Left colon (tissue), 2 donors: ENCODE measurements at regions of chr3 and their contacts with region 1.

Region 1: GRCh38 chr3:11059090-11059798 is 66.7 kb downstream of the SLC6A1 start:
- DNase-seq: peak in 1 of 2 donors; percentile 41
- ATAC-seq: peak; percentile 87

Region 2: DNA sequence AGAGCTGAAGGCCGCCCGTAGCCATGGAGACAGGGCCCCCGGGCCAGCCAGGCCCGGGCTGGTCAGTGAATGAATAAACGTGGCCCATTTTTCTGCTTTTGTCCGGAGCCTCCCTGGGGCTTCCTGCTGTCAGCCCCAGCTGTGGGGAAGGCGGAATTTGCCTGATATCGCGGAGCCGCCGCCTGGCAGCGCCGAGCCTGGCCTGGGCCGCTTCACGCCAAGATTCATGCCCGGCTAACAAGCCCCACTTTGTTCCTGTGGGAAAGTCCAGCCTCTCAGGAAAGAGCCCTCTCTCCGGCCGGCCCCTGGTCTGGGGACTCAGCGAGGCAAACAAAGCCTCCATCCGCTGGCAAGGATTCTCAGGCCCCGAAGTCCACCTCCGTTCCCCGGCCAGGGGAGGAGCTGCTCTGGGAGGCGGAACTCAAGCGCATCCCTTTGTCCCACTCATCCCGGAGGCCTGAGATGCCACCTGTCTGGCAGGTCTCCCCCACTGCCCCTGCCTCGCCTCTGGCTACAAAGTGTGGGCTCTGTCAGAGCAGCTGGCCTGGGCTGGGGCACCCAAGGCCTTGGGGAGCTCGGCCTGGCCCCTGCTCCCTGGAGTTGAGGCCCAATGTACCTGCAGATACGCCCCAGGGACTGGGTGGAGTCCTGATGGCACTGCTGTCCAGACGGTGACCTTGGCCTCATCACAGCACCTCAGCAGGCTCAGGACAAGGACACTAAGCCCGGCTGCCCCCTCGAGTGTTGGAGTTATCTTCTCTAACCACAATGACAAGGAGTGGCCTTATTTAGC is 294.8 kb before region 1 on chr3:
- intact Hi-C with region 1: loop called in 1 of 2 experiments (anchors 10 kb)
- DNase-seq: no peak
- ATAC-seq: no peak

Region 3: GRCh38 chr3:10945683-10946287 is 113.5 kb before region 1 on chr3:
- intact Hi-C with region 1: loop called (anchors 2 to 10 kb)
- DNase-seq: peak in 1 of 2 donors; percentile 53
- ATAC-seq: peak; percentile 65

Region 4: GRCh38 chr3:11155341-11156025 is 96.2 kb after region 1 on chr3:
- intact Hi-C with region 1: no loop called
- DNase-seq: peak; percentile 58 to 71
- ATAC-seq: peak; percentile 88